ENCODE measurements at regions of chr16 and their contacts with region 1.

Region 1: DNA sequence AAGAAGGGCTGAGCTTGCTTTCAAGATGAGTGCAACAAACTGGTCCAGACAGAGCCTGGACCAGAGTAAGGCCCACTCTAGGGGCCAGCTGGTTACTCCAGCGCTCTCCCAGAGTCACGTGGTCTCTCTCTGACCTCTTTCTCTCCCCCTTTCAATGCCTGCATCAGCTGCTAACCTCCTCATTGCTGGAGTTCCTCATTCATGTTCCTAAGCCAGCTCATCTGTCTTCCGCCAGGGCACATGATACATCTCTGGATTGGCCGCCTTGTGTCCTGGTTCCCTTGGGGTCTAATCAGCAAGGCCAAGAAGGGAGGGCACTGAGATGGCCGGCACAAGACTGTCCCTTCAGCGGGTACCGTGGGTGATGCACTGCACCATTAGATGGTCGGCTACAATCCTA is 26.9 kb upstream of the ZFP90 start:
- DNase-seq: no peak
- ATAC-seq: no peak
- H3K4me3 Mint-ChIP-seq: no peak overlapping the region
- H3K27ac Mint-ChIP-seq: no peak overlapping the region
- H3K4me1 Mint-ChIP-seq: peaks cover 10% of the 10 kb centered on the region
- H3K27me3 Mint-ChIP-seq: peaks cover 19% of the 10 kb centered on the region

Region 2: DNA sequence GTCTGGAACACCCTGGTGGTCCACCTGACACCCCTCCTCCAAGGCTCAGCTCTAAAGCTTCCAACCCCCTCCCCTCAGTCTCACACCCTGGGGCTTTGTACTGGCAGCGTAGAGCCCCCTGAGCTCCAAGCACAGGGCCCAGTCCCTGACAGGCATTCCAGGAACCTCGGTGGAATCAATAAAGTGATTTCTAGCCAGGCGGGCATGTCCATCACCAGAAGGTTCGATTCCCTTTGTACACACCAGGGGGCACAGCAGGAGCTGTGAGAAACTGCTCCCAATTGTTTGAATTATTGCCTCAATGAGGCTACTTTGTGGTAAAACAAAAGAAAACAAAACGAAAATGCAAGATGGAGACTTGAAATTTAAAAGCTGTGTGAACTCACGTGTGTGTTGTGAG is 115.7 kb before region 1 on chr16:
- CTCF ChIA-PET with region 1: interaction called, 29 read pairs
- DNase-seq: peak; percentile 65
- ATAC-seq: peak; percentile 70
- H3K4me3 Mint-ChIP-seq: no peak overlapping the region
- H3K27ac Mint-ChIP-seq: peak overlapping the region; percentile 56
- H3K4me1 Mint-ChIP-seq: peaks cover 25% of the 10 kb centered on the region
- H3K27me3 Mint-ChIP-seq: peaks cover 22% of the 10 kb centered on the region

Region 3: GRCh38 chr16:68445458-68445857 is 66.7 kb before region 1 on chr16:
- CTCF ChIA-PET with region 1: interaction called, 19 read pairs
- DNase-seq: peak; percentile 75
- ATAC-seq: no peak
- H3K4me3 Mint-ChIP-seq: no peak overlapping the region
- H3K27ac Mint-ChIP-seq: no peak overlapping the region
- H3K4me1 Mint-ChIP-seq: peaks cover 17% of the 10 kb centered on the region
- H3K27me3 Mint-ChIP-seq: peaks cover 55% of the 10 kb centered on the region

Region 4: DNA sequence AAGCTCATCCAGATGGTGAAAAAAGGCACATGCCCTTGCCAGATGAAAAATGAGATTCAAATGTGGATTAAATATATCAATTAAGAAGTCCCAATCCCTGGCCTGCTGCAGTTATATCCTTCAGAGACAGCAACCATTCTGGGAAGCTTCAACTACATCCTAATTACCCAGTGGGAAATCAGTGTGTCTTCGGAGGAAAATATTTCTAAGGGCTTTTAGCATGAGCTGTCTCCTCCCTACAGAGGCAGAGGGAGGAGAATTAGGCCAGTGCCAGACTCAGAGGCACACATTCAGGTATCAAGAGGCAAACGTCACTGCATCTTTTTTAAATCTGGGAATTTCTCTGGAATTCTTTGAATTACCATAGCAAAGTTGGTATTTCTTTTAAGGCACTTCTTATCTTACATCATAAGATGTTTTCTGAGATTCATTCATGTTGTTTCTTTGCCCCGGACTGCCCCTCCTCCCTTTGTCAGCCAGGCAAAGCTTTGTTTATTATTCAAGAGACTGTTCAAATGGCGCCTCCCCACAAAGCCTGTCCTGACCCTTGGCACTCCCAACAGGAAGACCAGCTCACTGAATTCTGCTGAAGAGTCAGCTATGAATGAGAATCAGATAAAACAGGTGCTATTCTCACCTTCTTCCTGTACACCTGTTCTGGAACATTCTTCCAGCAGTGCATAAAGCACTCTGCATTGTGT is 25.5 kb before region 1 on chr16:
- CTCF ChIA-PET with region 1: interaction called, 10 read pairs
- DNase-seq: no peak
- ATAC-seq: no peak
- H3K4me3 Mint-ChIP-seq: no peak overlapping the region
- H3K27ac Mint-ChIP-seq: no peak overlapping the region
- H3K4me1 Mint-ChIP-seq: no peaks in the 10 kb centered on the region
- H3K27me3 Mint-ChIP-seq: peaks cover 13% of the 10 kb centered on the region

Region 5: DNA sequence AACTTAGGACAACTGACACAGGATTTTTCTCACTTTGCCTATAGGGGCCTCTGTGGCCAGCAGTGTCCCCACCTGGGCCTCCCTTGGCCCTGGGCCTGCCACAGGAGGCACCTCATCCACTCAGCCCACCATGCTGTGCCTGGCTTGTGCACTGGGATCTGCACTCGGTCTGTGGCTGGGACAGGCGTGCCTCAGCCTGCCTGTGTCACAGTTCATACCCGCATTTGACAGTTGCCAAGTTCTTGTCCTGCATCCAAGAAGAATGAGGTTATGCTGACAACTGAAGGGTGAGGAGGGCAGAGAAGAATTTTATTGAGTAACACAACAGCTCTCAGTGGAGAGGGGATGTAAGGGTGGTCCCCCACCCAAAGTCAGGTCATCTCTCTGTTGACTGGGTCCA is 62.9 kb after region 1 on chr16:
- CTCF ChIA-PET with region 1: no interaction called
- DNase-seq: no peak
- ATAC-seq: no peak
- H3K4me3 Mint-ChIP-seq: no peak overlapping the region
- H3K27ac Mint-ChIP-seq: no peak overlapping the region
- H3K4me1 Mint-ChIP-seq: no peaks in the 10 kb centered on the region
- H3K27me3 Mint-ChIP-seq: no peaks in the 10 kb centered on the region

Region 6: GRCh38 chr16:68590201-68590994 is 78.2 kb after region 1 on chr16:
- CTCF ChIA-PET with region 1: no interaction called
- DNase-seq: peak; percentile 67
- ATAC-seq: peak; percentile 74
- H3K4me3 Mint-ChIP-seq: no peak overlapping the region
- H3K27ac Mint-ChIP-seq: no peak overlapping the region
- H3K4me1 Mint-ChIP-seq: peaks cover 2% of the 10 kb centered on the region
- H3K27me3 Mint-ChIP-seq: peaks cover 2% of the 10 kb centered on the region